ENCODE measurements at regions of chr1 and their contacts with region 1.

Region 1: GRCh38 chr1:234065794-234066447 is 161.4 kb downstream of the SLC35F3 start:
- DNase-seq: peak; percentile 45 to 77
- ATAC-seq: peak in 2 of 8 donors; percentile 42 to 70
- H3K4me3 ChIP-seq: no peak overlapping the region
- H3K27ac ChIP-seq: no peak overlapping the region
- H3K4me1 ChIP-seq: no peaks in the 10 kb centered on the region
- H3K27me3 ChIP-seq: peaks cover 0 to 9% (median 3%) of the 10 kb centered on the region in 7 donors
- CTCF ChIP-seq: peak; percentile 35 to 83 (median 74)

Region 2: GRCh38 chr1:233304489-233305102 is 761.3 kb before region 1 on chr1:
- intact Hi-C with region 1: loop called in 4 of 10 experiments (anchors 10 kb)
- DNase-seq: no peak
- ATAC-seq: no peak
- H3K4me3 ChIP-seq: no peak overlapping the region
- H3K27ac ChIP-seq: no peak overlapping the region
- H3K4me1 ChIP-seq: no peaks in the 10 kb centered on the region
- H3K27me3 ChIP-seq: peaks cover 0 to 15% (median 6%) of the 10 kb centered on the region in 7 donors
- CTCF ChIP-seq: peak; percentile 46 to 79 (median 74)

Region 3: GRCh38 chr1:233364695-233365539 is 701.0 kb before region 1 on chr1:
- intact Hi-C with region 1: loop called in 2 of 10 experiments (anchors 10 kb)
- DNase-seq: no peak
- ATAC-seq: no peak
- H3K4me3 ChIP-seq: no peak overlapping the region
- H3K27ac ChIP-seq: no peak overlapping the region
- H3K4me1 ChIP-seq: no peaks in the 10 kb centered on the region
- H3K27me3 ChIP-seq: peaks cover 0 to 25% (median 14%) of the 10 kb centered on the region in 7 donors
- CTCF ChIP-seq: peak; percentile 44 to 77 (median 69)

Region 4: DNA sequence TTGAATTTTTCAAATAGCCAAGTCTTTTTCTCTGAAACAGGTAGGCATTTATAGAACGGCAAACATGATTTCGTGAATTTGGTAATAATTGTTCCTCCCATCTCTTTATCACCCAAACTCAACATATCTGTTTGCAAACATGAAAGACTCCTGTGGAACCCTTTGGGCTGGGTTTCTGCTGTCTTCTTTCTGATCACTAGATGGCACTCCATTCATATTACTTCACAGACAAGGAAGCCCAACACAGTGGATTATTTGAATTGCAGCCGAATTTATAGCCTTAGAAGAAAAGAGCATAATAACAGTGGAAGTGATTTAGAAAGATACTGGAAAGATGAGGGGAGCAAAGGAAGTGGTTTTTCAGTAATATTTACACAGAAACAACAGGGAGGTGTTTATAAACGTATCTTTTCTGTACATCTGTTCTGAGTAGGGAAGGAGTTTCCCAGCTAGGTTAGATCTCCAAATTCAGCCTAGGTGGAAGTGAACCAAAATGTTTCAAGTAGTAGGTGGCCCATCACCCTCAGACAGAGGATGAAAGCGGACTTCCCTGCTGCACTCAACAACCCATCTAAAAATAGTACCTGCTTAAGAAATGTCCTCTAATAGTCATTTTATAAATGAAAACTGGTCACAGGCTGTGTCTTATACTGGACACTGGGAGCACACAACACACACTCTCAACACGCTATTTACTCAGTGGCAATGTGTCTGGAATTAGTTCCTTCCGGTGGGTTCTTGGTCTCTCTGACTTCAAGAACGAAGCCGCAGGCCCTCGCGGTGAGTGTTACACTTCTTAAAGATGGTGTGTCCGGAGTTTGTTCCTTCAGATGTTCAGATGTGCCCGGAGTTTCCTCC is 670.8 kb before region 1 on chr1:
- intact Hi-C with region 1: loop called in 5 of 10 experiments (anchors 2 to 10 kb)
- DNase-seq: peak in 1 of 2 donors; percentile 16
- ATAC-seq: peak in 5 of 8 donors; percentile 60 to 88 (median 73)
- H3K4me3 ChIP-seq: no peak overlapping the region
- H3K27ac ChIP-seq: no peak overlapping the region
- H3K4me1 ChIP-seq: peaks cover 0 to 4% (median 0%) of the 10 kb centered on the region in 9 donors
- H3K27me3 ChIP-seq: peaks cover 0 to 38% (median 7%) of the 10 kb centered on the region in 7 donors
- CTCF ChIP-seq: peak; percentile 21 to 77 (median 67)

Region 5: DNA sequence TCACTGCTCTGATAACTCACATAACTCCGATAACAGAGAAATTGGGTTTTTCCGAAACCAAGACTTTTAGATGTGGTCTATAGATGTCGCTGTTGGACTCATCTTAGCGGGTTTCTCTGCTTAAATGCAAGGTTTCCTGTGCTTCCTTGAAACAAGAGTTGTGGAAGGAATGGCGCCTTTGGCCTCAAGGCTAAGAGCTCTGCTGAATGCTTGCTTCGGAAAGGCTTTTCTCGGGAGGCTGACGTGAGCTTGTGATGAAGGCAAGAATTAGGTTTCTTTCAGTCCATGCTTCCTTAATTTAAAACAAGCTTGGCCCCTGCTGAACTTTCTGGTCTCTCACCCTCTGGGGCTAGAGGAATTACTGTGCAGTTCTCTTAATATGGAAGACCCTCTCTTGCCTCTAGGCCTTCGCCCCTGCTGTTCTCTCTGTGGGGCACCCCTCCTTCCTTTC is 624.9 kb before region 1 on chr1:
- intact Hi-C with region 1: loop called (anchors 1 to 10 kb)
- DNase-seq: peak in 1 of 2 donors; percentile 7
- ATAC-seq: peak in 5 of 8 donors; percentile 38 to 51 (median 47)
- H3K4me3 ChIP-seq: no peak overlapping the region
- H3K27ac ChIP-seq: no peak overlapping the region
- H3K4me1 ChIP-seq: peaks cover 0 to 4% (median 0%) of the 10 kb centered on the region in 9 donors
- H3K27me3 ChIP-seq: peaks cover 0 to 30% (median 15%) of the 10 kb centered on the region in 7 donors
- CTCF ChIP-seq: peak; percentile 14 to 74 (median 60)

Region 6: DNA sequence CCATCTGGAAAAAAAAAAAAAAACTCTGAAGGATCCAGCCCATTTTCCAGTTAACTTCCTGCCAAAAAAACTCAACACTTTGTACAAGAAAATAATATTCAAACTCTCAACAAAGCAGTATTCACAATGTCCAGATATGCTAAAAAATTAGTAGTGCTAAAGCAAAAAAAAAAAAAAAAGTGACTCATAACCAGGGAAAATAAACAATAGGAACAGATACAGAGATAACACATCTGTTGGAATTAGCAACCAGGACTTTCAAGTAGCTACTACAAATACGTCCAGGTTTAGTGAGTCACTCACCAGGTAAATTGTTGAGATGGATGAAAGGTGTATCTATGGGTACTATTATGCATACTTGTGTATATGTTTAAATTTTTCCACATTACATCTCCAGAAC is 306.3 kb before region 1 on chr1:
- intact Hi-C with region 1: no loop called
- DNase-seq: no peak
- ATAC-seq: no peak
- H3K4me3 ChIP-seq: no peak overlapping the region
- H3K27ac ChIP-seq: no peak overlapping the region
- H3K4me1 ChIP-seq: no peaks in the 10 kb centered on the region
- H3K27me3 ChIP-seq: no peaks in the 10 kb centered on the region
- CTCF ChIP-seq: no peak

Region 7: DNA sequence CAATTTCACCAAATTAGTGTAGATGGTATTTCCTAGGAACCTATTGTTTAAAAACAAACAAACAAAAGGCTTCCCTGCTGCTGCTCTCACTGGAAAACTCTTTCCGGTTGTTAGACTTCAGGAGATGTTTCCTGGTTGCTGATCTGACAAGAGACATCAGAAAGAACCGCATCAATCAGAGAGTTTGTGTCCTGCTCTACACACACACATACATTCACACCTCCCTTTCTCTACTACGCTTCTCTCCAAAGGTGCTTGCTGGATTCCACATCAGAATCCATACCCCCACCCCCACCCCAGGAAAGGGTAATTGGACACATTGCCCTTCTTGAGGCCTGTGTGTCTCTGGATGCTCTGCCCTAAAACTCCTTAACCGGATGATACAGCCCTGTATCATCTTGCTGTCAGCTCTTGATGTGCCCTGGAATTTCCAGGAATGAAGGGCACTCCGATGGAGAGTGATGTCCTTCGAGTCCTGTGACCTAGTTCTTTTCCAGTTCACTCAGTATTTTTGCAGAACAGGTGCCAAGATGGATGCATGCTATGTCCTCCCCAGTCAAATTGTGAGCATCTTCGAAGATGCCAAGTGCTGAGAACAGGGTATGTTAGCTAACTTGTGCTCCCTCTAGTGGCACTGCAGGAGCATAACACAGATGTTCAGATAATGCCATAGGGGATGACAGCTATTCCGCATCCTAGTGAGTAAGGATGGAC is 275.1 kb before region 1 on chr1:
- intact Hi-C with region 1: loop called in 1 of 10 experiments (anchors 10 kb)
- DNase-seq: peak in 1 of 2 donors; percentile 28
- ATAC-seq: peak in 7 of 8 donors; percentile 67 to 88 (median 79)
- H3K4me3 ChIP-seq: no peak overlapping the region
- H3K27ac ChIP-seq: no peak overlapping the region
- H3K4me1 ChIP-seq: no peaks in the 10 kb centered on the region
- H3K27me3 ChIP-seq: peaks cover 0 to 12% (median 0%) of the 10 kb centered on the region in 7 donors
- CTCF ChIP-seq: peak; percentile 65 to 87 (median 84)

Measured in heart right ventricle (tissue), 16 donors.